ENCODE measurements at regions of chr17 and their contacts with region 1.

Region 1: DNA sequence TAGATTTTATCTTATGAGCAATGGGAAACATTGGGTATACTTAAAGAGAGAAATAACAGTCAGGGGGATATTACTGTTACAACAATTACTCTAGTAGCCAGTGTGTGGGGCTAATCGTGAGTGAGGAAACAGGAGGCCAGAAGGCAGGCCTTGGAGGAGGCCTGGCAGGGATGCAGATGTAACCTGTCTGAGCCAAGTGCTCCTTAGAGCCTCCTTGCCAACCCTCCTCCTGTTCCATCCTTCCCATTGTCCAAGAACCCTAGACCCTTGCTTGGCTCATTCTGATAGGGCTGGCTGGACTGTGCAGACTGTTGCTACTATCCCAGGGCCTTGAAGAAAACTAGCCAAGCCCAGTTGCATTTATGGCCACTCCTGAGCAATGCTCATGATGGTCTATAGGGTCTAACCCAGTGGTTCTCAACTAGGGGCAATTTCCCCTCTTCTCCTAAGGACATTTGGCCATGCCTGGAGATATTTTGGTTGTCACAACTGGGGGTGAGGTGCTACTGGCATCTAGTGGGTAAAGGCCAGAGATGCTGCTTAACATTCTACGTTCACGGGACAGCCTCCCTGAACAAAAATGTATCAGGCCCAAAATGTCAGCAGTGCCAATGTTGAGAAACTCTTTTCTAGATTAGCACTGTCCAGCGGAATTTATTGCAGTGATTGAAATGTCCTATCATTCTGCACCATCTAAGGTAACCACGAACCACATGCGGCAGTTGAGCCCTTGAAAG is 24.4 kb upstream of the WSCD1 start:
- DNase-seq: no peak
- ATAC-seq: no peak
- H3K4me3 ChIP-seq: no peak overlapping the region
- H3K27ac ChIP-seq: no peak overlapping the region
- H3K4me1 ChIP-seq: no peaks in the 10 kb centered on the region
- H3K27me3 ChIP-seq: no peaks in the 10 kb centered on the region
- CTCF ChIP-seq: no peak

Region 2: DNA sequence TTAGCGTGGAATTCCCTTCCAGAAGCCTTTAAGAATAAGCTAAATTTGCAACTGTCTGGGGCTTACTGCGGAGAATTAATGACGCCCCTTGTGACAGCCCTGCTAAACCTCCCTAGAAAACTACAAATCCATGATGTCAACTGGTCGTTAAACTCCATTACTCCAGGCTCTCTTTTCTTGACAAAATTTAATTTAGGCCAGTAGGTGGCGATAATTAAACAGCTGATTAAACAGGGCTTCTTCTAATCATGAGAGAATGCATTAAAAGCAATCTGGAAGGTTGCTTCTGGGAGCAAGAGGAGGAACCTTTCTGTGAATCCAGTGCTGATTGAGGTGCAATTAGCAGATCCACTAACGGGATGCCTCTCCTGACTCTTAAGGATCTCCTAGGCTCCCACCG is 453.4 kb before region 1 on chr17:
- intact Hi-C with region 1: loop called in 1 of 2 experiments (anchors 10 kb)
- DNase-seq: no peak
- ATAC-seq: peak in 2 of 4 donors; percentile 44 to 71
- H3K4me3 ChIP-seq: no peak overlapping the region
- H3K27ac ChIP-seq: no peak overlapping the region
- H3K4me1 ChIP-seq: no peaks in the 10 kb centered on the region
- H3K27me3 ChIP-seq: peaks cover 0 to 36% (median 2%) of the 10 kb centered on the region in 3 donors
- CTCF ChIP-seq: peak; percentile 66